Mammary epithelial cell (primary cell): ENCODE measurements at regions of chr15 and their contacts with region 1.

Region 1: GRCh38 chr15:90352109-90352893 is at the start of gene ZNF774:
- DNase-seq: peak; percentile 95
- H3K4me3 ChIP-seq: peak within 1 kb of the TSS; percentile 66 to 78 (median 66)
- H3K27ac ChIP-seq: peak within 1 kb of the TSS; percentile 74
- H3K4me1 ChIP-seq: peaks cover 23% of the 10 kb centered on the region
- H3K27me3 ChIP-seq: no peaks in the 10 kb centered on the region
- CTCF ChIP-seq: no peak
- total RNA-seq, gene ZNF774: 5.7 to 6.0 TPM

Region 2: GRCh38 chr15:90336705-90337141 is 15.6 kb before region 1 on chr15:
- CTCF ChIA-PET with region 1: no interaction called
- dilution Hi-C with region 1: no loop called
- in situ Hi-C with region 1: no loop called
- intact Hi-C with region 1: loop called (anchors 1 kb)
- DNase-seq: peak; percentile 90
- H3K4me3 ChIP-seq: no peak overlapping the region
- H3K27ac ChIP-seq: peak overlapping the region; percentile 70
- H3K4me1 ChIP-seq: peaks cover 28% of the 10 kb centered on the region
- H3K27me3 ChIP-seq: no peaks in the 10 kb centered on the region
- CTCF ChIP-seq: no peak

Region 3: DNA sequence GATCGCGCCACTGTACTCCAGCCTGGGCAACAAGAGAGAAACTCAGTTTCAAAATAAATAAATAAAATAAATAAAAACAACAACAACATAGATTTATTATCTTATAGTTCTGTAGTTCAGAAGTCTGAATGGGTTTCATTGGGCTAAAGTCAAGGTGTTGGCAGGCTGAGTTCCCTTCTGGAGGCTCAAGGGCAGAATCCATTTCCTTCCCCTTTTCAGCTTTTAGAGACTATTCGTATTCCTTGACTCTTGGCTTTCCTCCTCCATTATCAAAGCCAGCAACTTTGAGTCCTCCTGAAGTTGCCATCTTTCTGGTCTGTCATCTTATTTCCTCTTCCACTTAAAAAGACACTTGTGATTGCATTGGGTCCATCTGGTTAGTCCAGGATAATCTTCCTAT is 377.0 kb after region 1 on chr15:
- CTCF ChIA-PET with region 1: no interaction called
- dilution Hi-C with region 1: no loop called
- in situ Hi-C with region 1: no loop called
- intact Hi-C with region 1: no loop called
- DNase-seq: no peak
- H3K4me3 ChIP-seq: no peak overlapping the region
- H3K27ac ChIP-seq: no peak overlapping the region
- H3K4me1 ChIP-seq: no peaks in the 10 kb centered on the region
- H3K27me3 ChIP-seq: no peaks in the 10 kb centered on the region
- CTCF ChIP-seq: no peak